ENCODE measurements at regions of chr4 and their contacts with region 1.

Region 1: DNA sequence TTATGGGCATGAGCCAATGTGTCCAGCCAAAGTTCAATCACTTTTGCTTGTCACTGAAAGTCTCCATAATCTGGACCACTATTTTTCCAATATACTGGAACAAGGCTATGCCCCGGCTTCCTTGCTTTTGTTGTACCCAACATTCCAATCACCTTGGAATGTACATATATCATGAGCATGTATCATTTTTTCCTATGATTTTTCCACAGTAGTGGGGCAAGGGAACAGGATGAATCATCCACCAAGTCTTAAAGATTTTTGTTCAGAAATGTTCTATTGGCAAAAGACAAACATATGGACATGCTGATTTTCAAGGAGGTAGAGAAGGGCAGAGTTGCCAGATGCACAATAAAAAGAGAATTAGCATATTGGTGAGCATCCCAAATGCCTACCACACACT is 548.1 kb upstream of the INTU start:
- DNase-seq: no peak
- H3K4me3 ChIP-seq: no peak overlapping the region
- H3K27ac ChIP-seq: no peak overlapping the region
- H3K4me1 ChIP-seq: no peaks in the 10 kb centered on the region
- H3K27me3 ChIP-seq: no peaks in the 10 kb centered on the region
- CTCF ChIP-seq: no peak
- POLR2A ChIP-seq: no peak

Region 2: DNA sequence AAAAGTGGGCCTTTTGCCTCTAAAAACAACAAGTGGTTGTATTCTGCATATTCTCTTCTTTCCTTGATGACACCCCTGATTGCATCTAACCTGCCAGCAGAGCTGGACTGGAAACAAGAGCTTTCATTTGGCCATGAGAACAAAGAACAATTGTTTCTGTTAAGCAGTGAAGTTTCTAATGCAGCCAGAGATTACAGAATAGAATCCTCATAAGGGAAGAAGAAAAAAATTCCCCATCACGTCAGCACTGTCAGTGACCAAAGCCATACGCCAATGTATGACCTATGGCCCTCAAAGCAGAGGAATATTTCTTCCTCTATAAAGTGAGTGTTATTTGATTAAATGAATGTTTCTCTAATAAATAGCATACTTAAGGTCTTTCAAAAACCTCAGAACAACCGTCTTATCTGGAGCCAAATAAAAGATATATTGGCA is 19.0 kb after region 1 on chr4:
- intact Hi-C with region 1: loop called (anchors 2 kb)
- DNase-seq: peak in 1 of 2 donors; percentile 33
- H3K4me3 ChIP-seq: no peak overlapping the region
- H3K27ac ChIP-seq: peak overlapping the region; percentile 51 to 57
- H3K4me1 ChIP-seq: no peaks in the 10 kb centered on the region
- H3K27me3 ChIP-seq: no peaks in the 10 kb centered on the region
- CTCF ChIP-seq: no peak
- POLR2A ChIP-seq: no peak

Measured in breast epithelium (tissue), 4 donors.